Sciatic nerve (tissue), 2 donors: ENCODE measurements at regions of chr16 and their contacts with region 1.

Region 1: GRCh38 chr16:84484579-84485254 is 19.7 kb downstream of the MEAK7 start:
- DNase-seq: peak; percentile 88
- ATAC-seq: peak; percentile 90

Region 2: GRCh38 chr16:83967806-83968305 is 516.9 kb before region 1 on chr16 and contains the start of gene NECAB2:
- intact Hi-C with region 1: loop called (anchors 10 kb)
- DNase-seq: peak; percentile 75
- ATAC-seq: peak; percentile 57
- total RNA-seq, gene NECAB2: 0.80 TPM

Region 3: DNA sequence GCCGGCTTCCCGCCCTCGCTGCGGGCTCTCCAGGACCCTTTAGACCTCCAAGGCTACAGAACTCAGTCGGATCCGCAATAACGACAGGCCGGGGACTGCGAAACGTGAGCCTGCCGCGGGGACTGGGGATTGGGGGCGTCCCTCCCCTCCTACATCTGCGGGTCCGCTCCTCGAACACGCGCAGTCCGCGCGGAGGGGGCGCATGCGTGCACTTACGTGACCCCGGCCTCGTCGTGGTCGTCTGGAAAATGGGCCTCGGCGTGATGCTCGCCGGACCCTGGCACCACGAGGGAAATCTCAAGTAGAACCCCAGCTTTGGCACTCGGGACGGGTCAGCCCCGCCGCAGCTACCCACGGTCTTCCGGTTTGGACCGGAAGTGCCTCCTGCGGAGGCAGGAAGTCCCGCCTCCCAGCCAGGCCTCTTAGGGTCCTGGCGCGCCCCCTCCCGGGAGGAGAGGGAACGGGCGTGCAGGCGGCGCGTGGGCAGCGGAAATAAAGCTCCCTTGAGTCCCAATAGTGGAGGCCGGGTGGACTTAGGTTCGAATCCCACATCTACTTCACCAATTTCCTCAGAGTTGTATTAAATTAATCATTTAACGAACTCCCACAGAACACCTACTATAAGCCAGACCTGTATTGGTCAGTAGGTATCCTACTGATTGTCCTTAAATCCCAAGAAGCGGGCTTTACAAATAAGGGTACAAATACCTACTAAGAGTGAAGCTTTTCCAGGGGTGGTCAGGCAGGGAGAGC is 297.9 kb before region 1 on chr16 and contains the start of gene TAF1C:
- intact Hi-C with region 1: loop called (anchors 10 kb)
- DNase-seq: peak; percentile 95
- ATAC-seq: peak; percentile 98
- total RNA-seq, gene TAF1C: 43.2 TPM

Region 4: DNA sequence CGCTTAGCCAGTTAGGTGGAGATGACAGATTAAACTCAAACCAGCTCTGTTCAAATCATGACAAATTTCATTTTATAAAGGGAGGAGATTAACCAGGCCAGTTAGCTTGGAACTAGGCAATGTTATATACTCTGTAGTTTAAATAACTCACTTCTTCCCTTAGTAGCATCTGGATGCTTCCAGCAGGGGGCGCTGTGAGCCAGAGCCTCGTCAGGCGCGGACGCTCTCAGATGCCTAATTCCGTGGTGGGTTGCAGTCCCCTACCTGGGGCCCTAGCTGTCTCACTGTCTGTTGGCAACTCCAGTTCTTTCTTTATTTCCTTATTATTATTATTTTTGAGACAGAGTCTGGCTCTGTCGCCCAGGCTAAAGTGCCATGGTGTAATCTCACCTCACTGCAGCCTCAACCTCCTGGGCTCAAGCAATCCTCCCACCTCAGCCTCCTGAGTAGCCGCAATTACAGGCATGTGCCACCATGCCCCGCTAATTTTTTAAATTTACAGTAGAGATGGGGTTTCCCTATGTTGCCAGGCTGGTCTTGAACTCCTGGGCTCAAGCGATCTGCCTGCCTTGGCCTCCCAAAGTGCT is 207.4 kb before region 1 on chr16:
- intact Hi-C with region 1: loop called (anchors 5 kb)
- DNase-seq: peak; percentile 87
- ATAC-seq: peak; percentile 78